ENCODE measurements at regions of chr3 and their contacts with region 1.

Region 1: GRCh38 chr3:178436773-178437172 is 99.5 kb upstream of the KCNMB2 start:
- DNase-seq: no peak

Region 2: GRCh38 chr3:178417736-178418135 is 19.0 kb before region 1 on chr3:
- intact Hi-C with region 1: no loop called
- DNase-seq: no peak

Region 3: DNA sequence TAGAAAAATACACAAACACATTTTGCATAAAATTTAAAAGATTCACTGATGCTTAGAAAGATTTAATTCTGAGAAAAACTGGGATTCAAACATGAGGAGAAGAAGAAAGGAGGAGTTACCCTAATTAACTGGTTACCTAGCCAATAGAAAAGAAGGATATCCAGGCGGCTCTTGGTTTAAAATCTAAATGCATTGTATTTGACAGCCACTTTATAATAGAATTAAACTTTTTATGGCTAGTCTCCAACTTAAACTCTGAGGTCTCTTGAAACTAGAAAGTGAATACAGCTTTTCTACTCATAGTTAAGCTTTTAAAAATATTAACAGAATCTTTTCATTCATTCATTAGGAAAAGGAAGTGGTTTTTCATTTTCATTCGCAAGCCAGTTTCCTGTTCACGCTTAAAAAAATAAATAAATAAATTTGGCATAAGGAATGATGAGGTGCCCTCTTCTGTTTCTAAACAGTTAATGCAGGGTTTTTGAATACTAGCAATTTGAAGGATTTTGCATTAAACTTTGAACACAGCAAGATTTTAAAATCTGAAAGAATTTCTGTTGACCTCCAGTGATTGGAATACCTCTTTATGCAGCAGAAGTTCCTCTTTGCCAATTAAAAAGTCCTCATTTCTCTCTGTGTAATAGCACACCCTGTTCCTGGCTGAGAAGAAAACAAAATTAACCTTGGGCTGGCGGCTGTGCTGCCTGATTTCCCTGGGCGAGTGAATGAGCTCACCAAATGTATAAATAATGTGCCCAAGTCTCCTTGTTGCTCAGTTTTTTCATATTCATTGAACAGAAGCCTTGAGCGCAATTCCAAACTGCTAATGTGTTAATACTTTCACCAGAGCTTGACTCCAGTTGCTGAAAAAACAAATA is 529.8 kb after region 1 on chr3:
- intact Hi-C with region 1: loop called (anchors 1 kb)
- DNase-seq: peak in 2 of 10 donors; percentile 13 to 59

Region 4: DNA sequence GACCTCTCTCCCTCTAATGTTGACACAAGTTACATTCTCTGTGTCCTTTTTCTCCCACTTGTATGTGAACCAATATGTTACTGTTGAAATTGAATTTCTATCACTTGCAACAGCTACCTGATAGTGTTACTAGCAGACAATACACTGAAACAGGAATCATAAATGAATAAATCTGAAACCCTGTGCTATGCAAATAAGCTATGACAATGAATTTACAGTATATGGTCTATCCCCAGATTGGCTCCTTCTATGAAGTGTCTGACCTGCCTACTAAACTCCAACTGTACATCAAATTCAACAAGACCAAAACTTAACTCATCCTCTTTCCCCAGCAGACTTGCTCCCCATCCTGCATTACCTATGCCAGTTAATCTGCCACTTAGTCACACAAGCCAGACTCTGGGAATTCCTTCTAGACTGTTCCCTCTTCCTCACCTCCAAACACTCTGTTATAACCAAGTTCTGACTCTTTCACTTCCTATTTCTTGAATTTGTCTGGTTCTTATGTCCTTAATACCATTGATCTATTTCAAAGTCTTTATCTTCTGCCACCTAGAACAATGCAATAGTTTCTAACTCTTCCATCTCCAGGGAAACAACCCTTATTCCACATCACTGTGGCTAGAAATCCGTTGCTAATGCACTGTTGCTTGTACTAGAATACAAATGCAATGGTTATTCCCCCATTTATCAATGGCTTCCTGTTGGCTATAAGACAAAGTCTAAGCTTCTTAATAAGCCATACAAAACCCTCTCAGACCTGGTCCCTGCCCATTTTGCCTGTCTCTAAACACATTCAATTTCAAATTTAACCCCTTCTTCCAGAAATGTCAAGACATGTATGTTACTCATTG is 872.7 kb after region 1 on chr3:
- intact Hi-C with region 1: loop called (anchors 10 kb)
- DNase-seq: no peak